ENCODE measurements at regions of chr5 and their contacts with region 1.

Region 1: DNA sequence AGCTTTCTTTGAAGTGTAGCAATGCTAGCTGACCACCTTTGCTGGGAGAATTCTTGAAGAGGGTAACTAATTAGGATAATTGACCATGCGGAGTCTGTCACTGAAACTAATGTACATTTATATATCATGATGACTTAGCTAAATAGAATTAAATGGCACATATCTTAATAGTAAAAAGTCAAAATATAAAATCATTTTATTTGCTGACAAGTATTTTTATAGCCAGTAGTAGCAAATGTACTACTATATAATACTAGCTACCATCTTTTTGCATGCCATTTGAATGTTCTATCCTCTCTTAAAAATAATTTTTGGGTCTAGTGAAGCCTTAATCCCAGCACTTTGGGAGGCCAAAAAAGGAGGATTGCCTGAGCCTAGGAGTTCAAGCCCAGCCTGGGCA is 605.8 kb upstream of the COX7C start:
- DNase-seq: no peak
- ATAC-seq: no peak

Region 2: DNA sequence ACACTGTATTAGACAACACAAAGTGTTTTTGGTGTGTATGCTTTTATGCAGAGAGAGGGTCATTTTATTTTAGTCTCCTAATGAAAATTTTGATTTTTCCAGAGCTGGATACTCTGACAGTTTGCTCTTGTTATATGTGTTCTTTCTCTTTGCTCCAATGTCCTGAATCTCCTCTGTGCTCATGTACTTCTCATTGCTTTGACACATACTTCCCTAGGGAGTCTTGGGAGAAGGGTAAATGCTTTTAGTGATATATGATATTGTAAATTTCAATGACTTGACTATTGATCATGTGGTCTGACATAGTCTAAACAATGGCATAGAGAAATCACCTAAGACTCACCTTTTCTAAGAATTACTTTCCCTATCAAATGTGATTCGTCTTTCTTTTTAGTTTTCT is 654.6 kb before region 1 on chr5:
- intact Hi-C with region 1: no loop called
- DNase-seq: no peak
- ATAC-seq: no peak

Region 3: GRCh38 chr5:85985167-85985566 is 26.8 kb before region 1 on chr5:
- intact Hi-C with region 1: no loop called
- DNase-seq: no peak
- ATAC-seq: no peak

Region 4: GRCh38 chr5:86095092-86095491 is 83.2 kb after region 1 on chr5:
- intact Hi-C with region 1: no loop called
- DNase-seq: no peak
- ATAC-seq: no peak

Region 5: GRCh38 chr5:87452837-87453236 is 1440.9 kb after region 1 on chr5:
- intact Hi-C with region 1: loop called (anchors 5 kb)
- DNase-seq: no peak
- ATAC-seq: no peak